Posterior vena cava (tissue), 2 donors: ENCODE measurements at regions of chr10 and their contacts with region 1.

Region 1: DNA sequence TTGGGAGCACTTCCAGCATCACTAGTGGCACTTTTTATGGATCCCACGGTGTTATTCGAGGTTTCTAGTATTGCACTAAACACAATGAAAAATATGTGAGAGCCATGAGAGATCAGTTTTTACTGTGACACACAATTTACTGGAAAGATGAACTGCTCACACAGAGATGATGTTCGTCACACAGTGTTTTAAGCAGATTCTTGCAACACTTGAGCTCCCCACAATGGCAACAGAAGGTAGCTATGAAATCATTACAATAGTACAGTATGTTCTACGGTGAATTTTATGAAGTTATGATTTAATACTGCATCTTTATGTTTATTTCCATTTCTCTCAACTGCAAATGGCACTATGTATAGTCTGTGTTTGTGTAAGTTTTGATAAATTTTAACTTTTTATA is 27.4 kb upstream of the ENTPD1 start:
- DNase-seq: no peak

Region 2: DNA sequence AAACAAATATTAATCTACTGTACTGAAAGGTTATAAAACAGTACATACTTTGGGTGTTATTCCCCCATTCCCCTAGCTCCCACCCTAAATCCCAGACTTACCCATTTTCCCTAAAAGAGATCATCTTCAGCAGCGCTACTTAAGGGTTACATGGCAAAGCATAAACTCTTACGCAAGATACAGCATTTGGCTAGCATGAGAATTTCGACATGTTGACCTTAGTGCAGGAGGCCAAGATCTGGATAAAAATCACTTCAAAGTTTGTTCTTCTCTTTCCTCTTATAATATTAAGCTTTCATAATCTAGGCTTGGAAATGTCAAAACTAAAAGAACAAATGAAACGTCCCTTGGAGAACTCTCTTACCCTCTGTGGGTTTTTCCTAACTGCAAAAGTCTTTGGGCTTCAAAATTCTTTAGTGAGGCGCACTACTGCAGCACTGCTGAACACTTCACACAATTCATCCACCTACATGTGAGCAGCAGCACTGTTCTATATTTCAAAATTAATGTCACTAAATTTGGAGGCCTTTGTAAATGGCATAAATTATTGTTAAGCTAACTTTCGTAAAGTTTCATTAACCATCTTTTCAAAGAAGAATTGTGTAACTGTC is 378.2 kb before region 1 on chr10:
- intact Hi-C with region 1: loop called in 1 of 2 experiments (anchors 5 kb)
- DNase-seq: no peak